Dendritic cell treated with granulocyte-macrophage colony-stimulating factor and Interleukin-4, amounts not matched to agents 40 ng/mL and 50 ng/mL, for 4 days (primary cell): ENCODE measurements at regions of chr2 and their contacts with region 1.

Region 1: DNA sequence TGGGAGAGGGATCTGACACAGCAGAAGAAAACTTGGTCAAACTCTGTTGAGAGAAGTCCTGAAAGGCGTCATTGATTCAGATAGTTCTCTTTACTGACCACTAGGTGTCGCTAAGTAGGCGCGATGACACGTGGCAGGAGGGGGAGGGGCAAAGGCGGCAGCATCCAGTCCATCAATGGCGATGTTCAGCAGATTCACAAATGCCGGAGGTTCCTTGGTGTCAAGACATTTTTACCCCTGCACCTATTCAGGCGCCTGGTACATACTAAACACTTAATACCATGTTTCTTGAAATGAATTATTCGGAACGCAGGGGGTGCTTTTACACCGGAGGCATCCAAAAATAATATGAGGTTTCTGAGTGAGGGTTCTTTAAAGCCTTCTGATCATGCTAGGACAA is 3.0 kb upstream of the PLEK start:
- H3K4me3 Mint-ChIP-seq: peak overlapping the region; percentile 55
- H3K27ac Mint-ChIP-seq: peak overlapping the region; percentile 99
- H3K4me1 Mint-ChIP-seq: peaks cover 35% of the 10 kb centered on the region
- H3K27me3 Mint-ChIP-seq: no peaks in the 10 kb centered on the region

Region 2: DNA sequence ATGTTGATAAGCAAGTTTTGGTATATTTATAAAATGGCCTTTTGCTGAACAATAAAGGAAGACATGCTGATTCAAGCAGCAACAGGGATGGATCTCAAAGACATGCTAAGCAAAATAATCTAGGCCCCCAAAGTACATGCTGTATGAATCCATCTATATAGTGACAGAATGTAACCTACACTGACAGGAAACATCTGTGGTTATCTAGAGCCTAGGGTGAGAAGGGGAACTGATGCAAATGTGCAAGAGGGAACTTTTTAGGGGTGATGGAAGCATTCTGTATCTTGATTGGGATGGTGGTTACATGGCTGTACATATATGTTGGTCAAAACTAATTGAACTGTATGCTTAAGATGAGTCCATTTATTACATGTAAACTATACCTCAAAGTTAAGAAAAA is 66.6 kb before region 1 on chr2:
- intact Hi-C with region 1: loop called (anchors 10 kb)
- H3K4me3 Mint-ChIP-seq: no peak overlapping the region
- H3K27ac Mint-ChIP-seq: no peak overlapping the region
- H3K4me1 Mint-ChIP-seq: peaks cover 15% of the 10 kb centered on the region
- H3K27me3 Mint-ChIP-seq: no peaks in the 10 kb centered on the region

Region 3: DNA sequence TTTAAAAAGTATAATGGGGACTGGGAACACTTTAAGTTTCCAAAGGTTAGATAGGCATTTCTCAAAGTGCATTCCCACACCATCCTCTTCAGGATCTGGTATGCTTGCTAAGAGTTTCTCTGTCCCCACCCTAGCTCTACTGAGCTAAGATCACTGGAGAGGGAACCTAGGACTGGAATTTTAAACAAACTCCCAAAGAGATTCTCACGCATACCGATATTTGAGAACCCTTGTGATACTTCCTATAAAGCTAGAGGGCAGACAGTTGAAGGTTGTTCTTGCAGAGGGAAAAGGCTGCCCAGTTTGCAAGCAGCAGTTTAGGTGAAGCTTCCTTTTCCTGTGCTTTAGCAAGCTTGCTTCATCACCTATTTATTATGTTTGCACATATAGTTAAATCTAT is 46.0 kb before region 1 on chr2:
- intact Hi-C with region 1: no loop called
- H3K4me3 Mint-ChIP-seq: no peak overlapping the region
- H3K27ac Mint-ChIP-seq: no peak overlapping the region
- H3K4me1 Mint-ChIP-seq: peaks cover 20% of the 10 kb centered on the region
- H3K27me3 Mint-ChIP-seq: peaks cover 24% of the 10 kb centered on the region